ENCODE measurements at regions of chr14 and their contacts with region 1.

Region 1: GRCh38 chr14:100654814-100655740 is 67.9 kb upstream of the BEGAIN start:
- DNase-seq: peak; percentile 31
- H3K4me3 Mint-ChIP-seq: no peak overlapping the region
- H3K27ac Mint-ChIP-seq: no peak overlapping the region
- H3K4me1 Mint-ChIP-seq: peaks cover 5% of the 10 kb centered on the region
- H3K27me3 Mint-ChIP-seq: peaks cover 35% of the 10 kb centered on the region

Region 2: GRCh38 chr14:100383727-100384158 is 271.3 kb before region 1 on chr14:
- intact Hi-C with region 1: loop called (anchors 2 kb)
- DNase-seq: peak; percentile 53
- H3K4me3 Mint-ChIP-seq: no peak overlapping the region
- H3K27ac Mint-ChIP-seq: no peak overlapping the region
- H3K4me1 Mint-ChIP-seq: peaks cover 7% of the 10 kb centered on the region
- H3K27me3 Mint-ChIP-seq: no peaks in the 10 kb centered on the region

Region 3: GRCh38 chr14:100440187-100440631 is 214.9 kb before region 1 on chr14:
- intact Hi-C with region 1: loop called (anchors 2 kb)
- DNase-seq: no peak
- H3K4me3 Mint-ChIP-seq: no peak overlapping the region
- H3K27ac Mint-ChIP-seq: no peak overlapping the region
- H3K4me1 Mint-ChIP-seq: peaks cover 27% of the 10 kb centered on the region
- H3K27me3 Mint-ChIP-seq: no peaks in the 10 kb centered on the region

Region 4: DNA sequence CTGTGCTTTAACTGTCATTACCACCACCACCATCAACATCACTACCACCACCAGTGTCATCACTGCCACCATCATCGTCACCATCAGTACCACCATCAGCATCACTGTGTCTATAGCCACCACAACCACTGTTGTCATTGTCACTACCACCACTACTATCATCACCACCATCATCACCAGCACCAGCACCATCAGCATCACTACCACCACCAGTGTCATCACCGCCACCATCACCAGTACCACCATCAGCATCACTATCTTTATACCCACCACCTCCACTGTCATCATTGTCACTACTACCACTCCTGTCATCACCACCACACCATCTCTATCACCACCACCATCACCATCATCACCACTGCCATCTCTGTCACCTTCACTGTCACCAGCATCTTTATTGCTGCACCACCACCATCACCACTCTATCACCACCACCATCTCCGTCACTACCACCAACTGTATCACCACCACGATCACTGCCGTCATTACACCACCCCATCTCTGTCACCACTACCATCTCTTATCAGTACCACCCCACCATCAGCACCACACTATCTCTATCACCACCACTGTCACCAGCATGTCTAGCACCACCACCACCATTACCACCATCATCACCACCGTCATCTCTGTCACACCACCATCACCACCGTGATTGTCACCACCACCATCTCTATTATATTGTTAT is 128.3 kb before region 1 on chr14:
- intact Hi-C with region 1: loop called (anchors 2 kb)
- DNase-seq: no peak
- H3K4me3 Mint-ChIP-seq: no peak overlapping the region
- H3K27ac Mint-ChIP-seq: no peak overlapping the region
- H3K4me1 Mint-ChIP-seq: no peaks in the 10 kb centered on the region
- H3K27me3 Mint-ChIP-seq: no peaks in the 10 kb centered on the region

Measured in activated T-helper 2 cell treated with anti-CD3 and anti-CD28 coated beads, Interferon-gamma antibody, Interleukin-2, Interleukin-4, amounts not matched to agents 10 μg/mL and 5 μg/mL and 100 μg/mL, durations not matched to agents 14 hours and 24 hours and 36 hours (primary cell).